Activated CD4-positive, alpha-beta memory T cell treated with anti-CD3 and anti-CD28 coated beads for 36 hours (primary cell): ENCODE measurements at regions of chr7 and their contacts with region 1.

Region 1: GRCh38 chr7:3065724-3066143 is 22.1 kb upstream of the CARD11 start:
- DNase-seq: peak; percentile 89
- H3K4me3 Mint-ChIP-seq: peak overlapping the region; percentile 64
- H3K27ac Mint-ChIP-seq: peak overlapping the region; percentile 83
- H3K4me1 Mint-ChIP-seq: peaks cover 86% of the 10 kb centered on the region
- H3K27me3 Mint-ChIP-seq: no peaks in the 10 kb centered on the region

Region 2: DNA sequence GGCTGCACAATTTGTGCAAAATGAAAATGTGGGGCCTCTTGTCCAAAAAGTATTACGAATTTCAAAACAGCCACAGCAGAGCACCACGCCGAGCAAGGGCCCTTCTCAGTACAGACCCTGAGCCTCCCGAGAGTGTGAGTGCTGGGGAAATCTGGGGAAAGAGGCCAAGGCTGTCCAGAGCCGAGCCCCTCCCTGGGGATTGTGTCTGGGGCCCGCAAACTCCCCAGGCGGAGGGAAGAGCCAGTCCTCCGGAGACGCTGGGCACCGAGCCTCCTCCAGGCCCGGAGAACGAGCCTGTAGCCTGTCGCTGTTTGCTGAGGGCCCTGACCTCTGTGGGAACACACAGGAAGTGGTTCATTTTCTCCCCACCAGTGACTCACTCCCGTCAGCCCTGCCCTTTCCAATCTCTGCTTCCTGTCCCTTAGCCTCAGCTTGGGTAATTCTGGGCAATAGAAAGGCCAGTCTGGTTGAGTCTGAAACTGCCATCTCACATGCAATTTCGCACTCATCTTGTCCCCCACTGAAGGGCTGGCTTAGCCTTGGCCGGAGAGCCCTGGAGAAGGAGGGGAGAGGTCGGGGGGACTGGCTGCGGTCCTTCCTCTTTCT is 202.2 kb before region 1 on chr7:
- CTCF ChIA-PET with region 1: interaction called, 18 read pairs
- POLR2A ChIA-PET with region 1: no interaction called
- intact Hi-C with region 1: loop called (anchors 2 kb)
- DNase-seq: peak; percentile 91
- H3K4me3 Mint-ChIP-seq: peak overlapping the region; percentile 73
- H3K27ac Mint-ChIP-seq: peak overlapping the region; percentile 91
- H3K4me1 Mint-ChIP-seq: peaks cover 25% of the 10 kb centered on the region
- H3K27me3 Mint-ChIP-seq: no peaks in the 10 kb centered on the region

Region 3: DNA sequence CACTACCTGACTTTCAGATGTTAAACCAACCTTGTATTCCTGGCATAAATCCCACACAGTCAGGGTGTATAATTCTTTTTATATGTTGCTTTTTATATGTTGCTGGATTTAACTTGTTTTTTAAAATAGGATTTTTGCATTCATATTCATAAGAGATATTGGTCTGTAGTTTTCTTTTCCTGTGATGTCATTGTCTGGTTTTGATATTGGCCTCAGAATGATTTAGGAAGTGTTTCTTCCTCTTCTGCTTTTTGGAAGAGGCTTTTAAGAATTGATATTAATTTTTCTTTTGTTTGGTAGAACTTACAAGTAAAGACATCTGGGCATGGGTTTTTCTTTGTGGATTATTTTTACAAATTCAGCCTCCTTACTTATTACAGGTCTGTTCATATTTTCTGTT is 115.2 kb before region 1 on chr7:
- CTCF ChIA-PET with region 1: no interaction called
- POLR2A ChIA-PET with region 1: no interaction called
- intact Hi-C with region 1: no loop called
- DNase-seq: no peak
- H3K4me3 Mint-ChIP-seq: no peak overlapping the region
- H3K27ac Mint-ChIP-seq: peak overlapping the region; percentile 24
- H3K4me1 Mint-ChIP-seq: peaks cover 71% of the 10 kb centered on the region
- H3K27me3 Mint-ChIP-seq: no peaks in the 10 kb centered on the region

Region 4: GRCh38 chr7:2978403-2978802 is 87.3 kb before region 1 on chr7:
- CTCF ChIA-PET with region 1: no interaction called
- POLR2A ChIA-PET with region 1: interaction called, 5 read pairs
- intact Hi-C with region 1: loop called (anchors 1 kb)
- DNase-seq: peak; percentile 97
- H3K4me3 Mint-ChIP-seq: peak overlapping the region; percentile 63
- H3K27ac Mint-ChIP-seq: peak overlapping the region; percentile 91
- H3K4me1 Mint-ChIP-seq: peaks cover 69% of the 10 kb centered on the region
- H3K27me3 Mint-ChIP-seq: no peaks in the 10 kb centered on the region

Region 5: DNA sequence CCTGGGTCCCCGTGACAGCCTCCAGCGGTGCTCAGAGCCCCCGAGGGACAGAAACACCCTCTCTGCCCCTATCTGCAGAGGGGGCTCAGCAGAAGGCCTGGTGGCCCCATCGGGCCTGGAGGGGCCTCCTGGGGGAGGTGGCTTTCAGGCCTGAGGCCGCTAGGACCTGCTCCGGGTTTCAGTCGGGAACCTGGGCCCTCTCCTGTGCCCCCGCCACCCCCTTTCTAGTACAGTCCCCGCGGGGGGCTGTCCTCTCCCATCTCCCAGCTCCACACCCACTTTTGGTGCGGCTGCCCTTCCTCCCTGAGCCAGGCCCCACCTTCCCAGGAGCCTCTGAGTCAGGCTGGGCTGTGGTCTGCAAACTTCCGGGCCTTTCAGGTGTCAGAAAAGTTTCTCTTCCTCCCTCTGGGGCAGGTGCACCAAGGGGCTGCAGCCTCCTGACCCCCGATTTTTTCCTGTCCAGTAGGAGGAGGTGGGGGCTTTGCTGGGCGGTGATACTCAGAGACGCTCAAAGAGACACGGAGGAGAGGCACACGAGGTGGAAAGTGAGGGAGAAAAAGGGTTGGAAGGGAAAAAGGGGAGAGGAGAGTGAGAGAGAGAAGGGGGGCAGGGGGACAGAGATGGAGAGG is 22.8 kb before region 1 on chr7:
- CTCF ChIA-PET with region 1: interaction called, 33 read pairs
- POLR2A ChIA-PET with region 1: interaction called, 5 read pairs
- intact Hi-C with region 1: loop called (anchors 1 kb)
- DNase-seq: peak; percentile 89
- H3K4me3 Mint-ChIP-seq: peak overlapping the region; percentile 98
- H3K27ac Mint-ChIP-seq: peak overlapping the region; percentile 99
- H3K4me1 Mint-ChIP-seq: peaks cover 46% of the 10 kb centered on the region
- H3K27me3 Mint-ChIP-seq: no peaks in the 10 kb centered on the region

Region 6: GRCh38 chr7:3106361-3106826 is 40.7 kb after region 1 on chr7:
- CTCF ChIA-PET with region 1: interaction called, 33 read pairs
- POLR2A ChIA-PET with region 1: interaction called, 7 read pairs
- intact Hi-C with region 1: loop called (anchors 1 kb)
- DNase-seq: peak; percentile 80
- H3K4me3 Mint-ChIP-seq: no peak overlapping the region
- H3K27ac Mint-ChIP-seq: peak overlapping the region; percentile 84
- H3K4me1 Mint-ChIP-seq: peaks cover 70% of the 10 kb centered on the region
- H3K27me3 Mint-ChIP-seq: no peaks in the 10 kb centered on the region

Region 7: DNA sequence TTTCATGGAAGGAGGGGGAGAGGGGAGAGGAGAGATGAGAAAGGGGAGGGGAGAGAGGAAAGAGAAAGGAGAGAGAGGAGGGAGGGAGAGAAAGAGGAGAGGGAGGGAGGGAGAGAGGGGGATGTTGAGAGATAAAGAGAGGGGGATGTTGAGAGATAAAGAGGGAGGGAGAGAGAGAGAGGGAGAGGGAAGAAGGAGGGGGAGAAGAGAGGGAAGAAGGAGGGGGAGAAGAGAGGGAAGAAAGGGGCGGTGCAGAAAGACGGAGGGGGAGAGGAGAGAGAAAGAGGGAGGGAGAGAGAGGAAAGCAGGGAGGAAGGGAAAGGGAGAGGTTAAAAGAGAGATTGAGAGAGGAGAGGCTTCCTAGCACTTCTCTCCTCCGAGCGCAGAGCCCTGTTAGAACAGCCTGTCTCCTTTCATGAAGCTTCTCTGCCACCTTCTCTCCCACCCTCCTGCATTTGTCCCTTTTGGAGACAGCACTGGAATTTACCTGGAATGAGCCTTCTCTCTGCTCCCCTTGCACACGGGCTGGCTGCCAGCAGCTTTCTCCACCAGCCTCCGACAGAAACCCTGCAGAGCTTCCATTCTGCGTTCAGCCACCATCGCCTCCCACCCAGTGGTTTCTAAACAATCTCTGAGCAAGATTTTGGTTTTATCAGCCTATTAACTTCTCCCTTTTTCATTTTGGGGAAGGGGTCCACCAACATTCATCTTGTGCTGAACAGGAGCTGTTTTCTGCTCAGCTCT is 51.9 kb after region 1 on chr7:
- CTCF ChIA-PET with region 1: interaction called, 15 read pairs
- POLR2A ChIA-PET with region 1: interaction called, 5 read pairs
- intact Hi-C with region 1: loop called (anchors 1 kb)
- DNase-seq: peak; percentile 69
- H3K4me3 Mint-ChIP-seq: peak overlapping the region; percentile 72
- H3K27ac Mint-ChIP-seq: peak overlapping the region; percentile 75
- H3K4me1 Mint-ChIP-seq: peaks cover 73% of the 10 kb centered on the region
- H3K27me3 Mint-ChIP-seq: no peaks in the 10 kb centered on the region

Region 8: GRCh38 chr7:3844540-3845148 is 778.9 kb after region 1 on chr7:
- CTCF ChIA-PET with region 1: no interaction called
- POLR2A ChIA-PET with region 1: no interaction called
- intact Hi-C with region 1: no loop called
- DNase-seq: no peak
- H3K4me3 Mint-ChIP-seq: no peak overlapping the region
- H3K27ac Mint-ChIP-seq: no peak overlapping the region
- H3K4me1 Mint-ChIP-seq: no peaks in the 10 kb centered on the region
- H3K27me3 Mint-ChIP-seq: peaks cover 2% of the 10 kb centered on the region